ENCODE measurements at regions of chr14 and their contacts with region 1.

Region 1: GRCh38 chr14:39169541-39169900 is 612 bp downstream of the TRAPPC6B start:
- DNase-seq: no peak
- ATAC-seq: peak; percentile 36 to 55

Region 2: DNA sequence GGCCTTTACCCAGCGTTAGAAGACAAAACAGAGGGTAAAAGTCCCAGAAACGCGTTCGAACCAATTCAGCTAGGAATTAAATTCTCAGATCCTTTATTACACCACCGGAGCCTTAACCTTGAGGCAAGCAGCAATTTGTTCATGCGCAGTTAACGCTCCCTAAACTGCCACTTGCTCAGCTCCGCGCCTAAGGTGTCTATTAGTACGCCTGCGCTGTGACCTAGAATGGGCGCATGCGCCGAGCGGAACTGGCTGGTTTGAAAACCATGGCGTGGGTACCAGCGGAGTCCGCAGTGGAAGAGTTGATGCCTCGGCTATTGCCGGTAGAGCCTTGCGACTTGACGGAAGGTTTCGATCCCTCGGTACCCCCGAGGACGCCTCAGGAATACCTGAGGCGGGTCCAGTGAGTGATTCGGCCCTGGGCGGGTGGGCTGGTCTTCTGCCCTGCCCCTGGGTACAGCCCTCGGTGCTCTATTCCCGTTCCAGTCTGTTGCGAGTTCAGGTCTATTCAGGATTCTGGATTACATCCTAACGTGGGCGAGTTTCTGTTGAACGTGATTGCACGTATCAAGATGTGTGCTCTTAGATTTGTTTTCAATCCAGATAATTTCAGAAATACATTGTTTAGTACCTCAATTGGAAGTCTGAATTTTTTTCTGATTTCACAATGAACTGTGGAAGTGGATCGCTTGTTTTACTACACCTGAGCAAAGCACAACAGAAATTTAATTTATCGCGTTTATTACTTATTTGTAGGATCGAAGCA is 55.3 kb before region 1 on chr14 and contains the start of gene GEMIN2:
- intact Hi-C with region 1: loop called (anchors 10 kb)
- DNase-seq: peak; percentile 95
- ATAC-seq: peak; percentile 100
- total RNA-seq, gene GEMIN2: 5.4 to 9.1 TPM

Measured in left cardiac atrium (tissue), 4 donors.